K562 (cell line): ENCODE measurements at regions of chr2 and their contacts with region 1.

Region 1: DNA sequence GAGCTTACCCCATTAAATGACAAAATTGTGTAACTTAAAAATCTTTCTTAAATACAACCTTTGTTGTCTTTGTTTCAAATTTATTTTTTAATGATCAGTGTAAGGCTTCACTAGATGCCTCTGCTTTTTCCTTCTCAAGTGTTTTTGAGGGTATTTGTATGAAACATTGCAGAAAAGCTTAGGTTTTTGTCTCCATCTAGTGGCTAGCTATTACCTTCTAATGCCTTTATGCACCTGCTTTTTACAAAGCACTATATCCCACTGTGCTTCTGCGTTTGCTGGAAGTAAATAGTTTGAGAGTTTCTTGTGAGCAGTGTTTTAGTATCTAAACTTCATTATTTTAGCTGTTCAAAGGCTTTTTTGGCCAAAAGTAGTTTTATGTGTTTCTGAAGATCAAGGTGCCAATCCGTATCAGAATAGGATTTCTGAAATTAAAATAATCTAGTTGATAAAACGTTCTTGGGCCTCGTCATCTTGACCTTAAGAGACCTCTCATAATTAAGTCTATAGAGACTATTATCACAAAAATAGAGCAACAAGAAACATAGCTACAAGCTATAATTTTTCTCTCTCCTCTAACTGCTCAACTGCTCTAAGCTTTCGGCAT is 47.0 kb downstream of the IWS1 start:
- DNase-seq: peak in 3 of 4 experiments; percentile 27 to 48 (median 29)
- ATAC-seq: peak; percentile 96
- H3K4me3 ChIP-seq: no peak overlapping the region
- H3K27ac ChIP-seq: no peak overlapping the region
- H3K4me1 ChIP-seq: no peaks in the 10 kb centered on the region
- H3K27me3 ChIP-seq: no peaks in the 10 kb centered on the region
- CTCF ChIP-seq: peak; percentile 45 to 75 (median 72); a peak in 5 of 6 replicates
- EP300 ChIP-seq: no peak
- POLR2A ChIP-seq: no peak
- RAD21 ChIP-seq: peak; percentile 79

Region 2: DNA sequence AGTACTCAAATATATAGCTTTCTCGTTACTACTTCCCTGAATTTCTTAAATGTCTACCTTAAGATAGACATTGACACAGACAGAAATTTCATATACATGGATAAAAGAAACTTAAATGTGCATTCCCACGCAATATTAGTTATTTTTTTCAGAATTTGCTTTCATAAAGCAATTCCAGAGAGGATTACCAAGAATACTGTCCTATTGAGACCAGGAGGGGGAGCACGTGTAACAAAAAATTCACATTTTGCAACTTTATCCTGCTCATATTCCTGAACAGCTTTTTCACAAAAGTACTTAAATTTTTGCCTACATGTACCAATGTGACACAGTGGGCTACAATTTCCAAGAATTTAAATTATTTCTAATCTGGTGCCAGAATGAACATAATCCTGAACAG is 154.7 kb before region 1 on chr2:
- CTCF ChIA-PET with region 1: interaction called, 17 read pairs
- POLR2A ChIA-PET with region 1: no interaction called
- in situ Hi-C with region 1: no loop called
- intact Hi-C with region 1: no loop called
- DNase-seq: peak; percentile 31 to 54 (median 38)
- ATAC-seq: peak; percentile 79
- H3K4me3 ChIP-seq: no peak overlapping the region
- H3K27ac ChIP-seq: no peak overlapping the region
- H3K4me1 ChIP-seq: no peaks in the 10 kb centered on the region
- H3K27me3 ChIP-seq: no peaks in the 10 kb centered on the region
- CTCF ChIP-seq: peak; percentile 50 to 76 (median 51); a peak in 4 of 6 replicates
- EP300 ChIP-seq: no peak
- POLR2A ChIP-seq: no peak
- RAD21 ChIP-seq: peak; percentile 72 to 78

Region 3: GRCh38 chr2:127379712-127380355 is 99.5 kb before region 1 on chr2:
- CTCF ChIA-PET with region 1: no interaction called
- POLR2A ChIA-PET with region 1: no interaction called
- in situ Hi-C with region 1: no loop called
- intact Hi-C with region 1: no loop called
- DNase-seq: no peak
- ATAC-seq: no peak; the same call in 2 of the 3 replicates
- H3K4me3 ChIP-seq: no peak overlapping the region
- H3K27ac ChIP-seq: no peak overlapping the region
- H3K4me1 ChIP-seq: no peaks in the 10 kb centered on the region
- H3K27me3 ChIP-seq: no peaks in the 10 kb centered on the region
- CTCF ChIP-seq: no peak
- EP300 ChIP-seq: no peak
- POLR2A ChIP-seq: no peak
- RAD21 ChIP-seq: no peak

Region 4: GRCh38 chr2:127531221-127531648 is 51.9 kb after region 1 on chr2:
- CTCF ChIA-PET with region 1: no interaction called
- POLR2A ChIA-PET with region 1: no interaction called
- in situ Hi-C with region 1: no loop called
- intact Hi-C with region 1: no loop called
- DNase-seq: peak in 1 of 4 experiments; percentile 25
- ATAC-seq: no peak
- H3K4me3 ChIP-seq: no peak overlapping the region
- H3K27ac ChIP-seq: no peak overlapping the region
- H3K4me1 ChIP-seq: peaks cover 3 to 9% of the 10 kb centered on the region in 2 experiments; a peak in 4 of 5 replicates
- H3K27me3 ChIP-seq: peaks cover 19 to 42% of the 10 kb centered on the region in 2 experiments
- CTCF ChIP-seq: peak in 2 of 3 experiments; percentile 11 to 35; a peak in 1 of 6 replicates
- EP300 ChIP-seq: no peak
- POLR2A ChIP-seq: no peak
- RAD21 ChIP-seq: no peak

Region 5: GRCh38 chr2:127563458-127564428 is 84.4 kb after region 1 on chr2:
- CTCF ChIA-PET with region 1: no interaction called
- POLR2A ChIA-PET with region 1: no interaction called
- in situ Hi-C with region 1: no loop called
- intact Hi-C with region 1: no loop called
- DNase-seq: no peak
- ATAC-seq: no peak
- H3K4me3 ChIP-seq: no peak overlapping the region
- H3K27ac ChIP-seq: no peak overlapping the region
- H3K4me1 ChIP-seq: 0 out of 5 replicates have a peak, but pooled peaks cover 0 to 3% of the 10 kb centered on the region in 2 experiments
- H3K27me3 ChIP-seq: peaks cover 42 to 90% of the 10 kb centered on the region in 2 experiments
- CTCF ChIP-seq: no peak
- EP300 ChIP-seq: no peak
- POLR2A ChIP-seq: no peak
- RAD21 ChIP-seq: no peak